GM12878 (cell line): ENCODE measurements at regions of chr2 and their contacts with region 1.

Region 1: DNA sequence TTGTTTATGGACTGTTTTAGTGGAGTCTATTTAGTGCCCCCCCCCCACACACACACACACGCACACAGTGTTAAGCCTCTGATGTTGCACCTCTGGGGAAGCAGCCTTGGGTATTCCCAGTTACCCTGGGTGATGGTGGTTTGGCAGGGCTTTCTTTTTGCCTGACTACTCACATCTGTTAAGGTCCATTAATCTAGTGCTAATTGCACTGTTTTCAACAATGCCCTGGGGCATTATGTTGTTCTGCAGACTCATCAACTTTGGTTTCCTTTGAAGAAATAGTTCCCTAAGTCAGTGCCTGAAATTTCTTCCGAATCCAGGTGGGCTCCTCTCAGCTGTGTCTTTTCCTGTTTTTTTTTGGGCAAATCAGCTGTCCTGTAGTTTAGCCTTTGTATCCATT is 34.7 kb downstream of the SPOPL start:
- DNase-seq: peak; percentile 61
- ATAC-seq: peak; percentile 95
- H3K4me3 ChIP-seq: no peak overlapping the region
- H3K27ac ChIP-seq: peak overlapping the region; percentile 2; the same call in 1 of the 2 replicates
- H3K4me1 ChIP-seq: no peaks in the 10 kb centered on the region; the same call in 1 of the 2 replicates
- H3K27me3 ChIP-seq: no peaks in the 10 kb centered on the region
- CTCF ChIP-seq: no peak
- EP300 ChIP-seq: 0 out of 4 replicates have a peak, but pooled peaks of 1 of the 2 experiments have one; percentile 19
- POLR2A ChIP-seq: no peak
- RAD21 ChIP-seq: no peak

Region 2: DNA sequence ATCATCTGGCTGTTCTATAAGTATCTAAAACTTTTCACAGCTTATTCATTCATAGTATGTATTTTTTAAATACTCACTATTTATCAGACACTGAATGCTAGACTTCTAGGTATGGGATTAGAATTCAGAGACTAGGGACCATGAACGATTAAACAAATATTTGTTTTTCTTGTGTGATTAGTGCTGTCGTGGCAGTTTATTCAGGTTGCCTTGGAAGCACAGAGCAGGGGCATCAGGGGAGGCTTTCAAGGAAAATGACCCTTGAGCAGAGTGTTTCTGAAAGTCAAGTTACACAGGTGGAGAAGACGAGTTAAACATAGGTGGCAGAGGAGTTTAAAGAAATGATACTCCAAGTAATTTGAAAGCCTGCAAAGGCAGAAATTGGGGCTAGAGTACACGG is 29.0 kb before region 1 on chr2:
- CTCF ChIA-PET with region 1: interaction called, 5 read pairs
- POLR2A ChIA-PET with region 1: interaction called, 8 read pairs
- RAD21 ChIA-PET with region 1: interaction called, 8 read pairs
- SMC1A ChIA-PET with region 1: interaction called, 24 read pairs
- in situ Hi-C with region 1: no loop called
- intact Hi-C with region 1: no loop called
- DNase-seq: no peak
- ATAC-seq: no peak; the same call in 2 of the 3 replicates
- H3K4me3 ChIP-seq: 0 out of 2 replicates have a peak overlapping the region, but pooled peaks have one; percentile 29
- H3K27ac ChIP-seq: no peak overlapping the region
- H3K4me1 ChIP-seq: peaks cover 15% of the 10 kb centered on the region
- H3K27me3 ChIP-seq: no peaks in the 10 kb centered on the region
- CTCF ChIP-seq: no peak
- EP300 ChIP-seq: no peak
- POLR2A ChIP-seq: no peak
- RAD21 ChIP-seq: no peak

Region 3: DNA sequence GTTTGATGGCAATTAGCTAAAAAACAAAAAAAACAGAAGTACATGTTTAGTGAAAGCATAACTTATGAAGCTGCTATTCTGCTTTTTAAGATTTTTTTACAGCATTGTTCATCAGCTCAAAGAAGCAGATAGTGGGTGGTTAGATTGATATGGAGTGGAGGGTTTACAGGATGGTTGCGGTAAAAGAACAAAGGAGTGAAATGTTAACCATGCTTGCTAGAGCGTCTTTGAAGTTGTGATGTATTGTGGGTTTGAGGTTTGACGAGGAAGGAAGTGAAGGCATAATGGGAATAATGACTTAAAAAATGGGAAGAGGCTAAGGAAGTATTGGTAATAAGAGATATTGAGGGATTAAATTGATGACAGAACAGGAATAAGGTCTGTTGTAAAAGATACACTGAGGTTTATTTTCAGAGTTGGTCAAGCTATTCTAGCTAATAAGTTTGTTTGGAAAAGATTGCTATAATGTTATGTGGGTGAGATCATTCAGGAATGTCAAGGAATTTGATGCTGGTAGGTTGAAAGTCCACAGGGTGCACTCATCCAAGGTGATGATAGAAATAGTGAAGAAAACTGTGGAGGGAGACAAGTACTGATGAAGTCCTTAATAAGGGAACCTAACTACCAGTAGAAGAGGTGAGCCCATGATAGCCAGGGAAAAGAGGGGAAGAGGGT is 20.1 kb before region 1 on chr2:
- CTCF ChIA-PET with region 1: interaction called, 4 read pairs
- POLR2A ChIA-PET with region 1: interaction called, 8 read pairs
- RAD21 ChIA-PET with region 1: interaction called, 7 read pairs
- SMC1A ChIA-PET with region 1: interaction called, 60 read pairs
- in situ Hi-C with region 1: no loop called
- intact Hi-C with region 1: no loop called
- DNase-seq: no peak
- ATAC-seq: peak; percentile 26; the same call in 2 of the 3 replicates
- H3K4me3 ChIP-seq: no peak overlapping the region
- H3K27ac ChIP-seq: no peak overlapping the region
- H3K4me1 ChIP-seq: peaks cover 8% of the 10 kb centered on the region; the same call in 1 of the 2 replicates
- H3K27me3 ChIP-seq: no peaks in the 10 kb centered on the region
- CTCF ChIP-seq: no peak
- EP300 ChIP-seq: no peak
- POLR2A ChIP-seq: no peak
- RAD21 ChIP-seq: no peak

Region 4: DNA sequence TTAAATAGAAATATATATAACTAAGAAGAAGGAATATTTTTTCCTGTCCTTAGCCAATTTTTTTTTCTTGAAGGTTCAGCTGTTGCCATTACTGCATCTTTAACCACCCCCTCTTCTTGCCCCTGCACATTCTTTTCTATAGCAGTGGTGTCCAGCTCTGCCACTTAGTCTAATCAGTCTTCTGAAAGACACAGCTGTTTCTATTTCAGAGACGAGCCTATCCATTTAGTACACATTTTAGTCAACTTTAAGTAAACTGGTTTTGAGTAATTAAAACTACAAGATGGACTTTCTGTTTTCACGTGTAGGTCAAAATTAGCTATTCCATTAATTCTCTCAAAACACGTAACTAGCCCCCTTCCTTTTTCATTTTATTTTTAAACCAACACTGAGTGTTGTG is 13.7 kb before region 1 on chr2:
- CTCF ChIA-PET with region 1: interaction called, 4 read pairs
- POLR2A ChIA-PET with region 1: interaction called, 35 read pairs
- RAD21 ChIA-PET with region 1: interaction called, 15 read pairs
- SMC1A ChIA-PET with region 1: interaction called, 60 read pairs
- in situ Hi-C with region 1: no loop called
- intact Hi-C with region 1: no loop called
- DNase-seq: no peak
- ATAC-seq: peak; percentile 81
- H3K4me3 ChIP-seq: peak overlapping the region; percentile 36; the same call in 1 of the 2 replicates
- H3K27ac ChIP-seq: peak overlapping the region; percentile 84
- H3K4me1 ChIP-seq: peaks cover 26% of the 10 kb centered on the region
- H3K27me3 ChIP-seq: no peaks in the 10 kb centered on the region
- CTCF ChIP-seq: no peak
- EP300 ChIP-seq: no peak
- POLR2A ChIP-seq: no peak
- RAD21 ChIP-seq: no peak